Activated CD4-positive, alpha-beta memory T cell treated with anti-CD3 and anti-CD28 coated beads for 36 hours (primary cell): ENCODE measurements at regions of chr5 and their contacts with region 1.

Region 1: GRCh38 chr5:131394128-131394527 is 130.3 kb downstream of the CDC42SE2 start:
- DNase-seq: peak; percentile 69
- H3K4me3 Mint-ChIP-seq: peak overlapping the region; percentile 66
- H3K27ac Mint-ChIP-seq: peak overlapping the region; percentile 93
- H3K4me1 Mint-ChIP-seq: peaks cover 86% of the 10 kb centered on the region
- H3K27me3 Mint-ChIP-seq: no peaks in the 10 kb centered on the region

Region 2: GRCh38 chr5:131068893-131069643 is 325.1 kb before region 1 on chr5:
- CTCF ChIA-PET with region 1: no interaction called
- POLR2A ChIA-PET with region 1: no interaction called
- intact Hi-C with region 1: loop called (anchors 5 kb)
- DNase-seq: peak; percentile 79
- H3K4me3 Mint-ChIP-seq: peak overlapping the region; percentile 1
- H3K27ac Mint-ChIP-seq: peak overlapping the region; percentile 90
- H3K4me1 Mint-ChIP-seq: peaks cover 49% of the 10 kb centered on the region
- H3K27me3 Mint-ChIP-seq: no peaks in the 10 kb centered on the region

Region 3: DNA sequence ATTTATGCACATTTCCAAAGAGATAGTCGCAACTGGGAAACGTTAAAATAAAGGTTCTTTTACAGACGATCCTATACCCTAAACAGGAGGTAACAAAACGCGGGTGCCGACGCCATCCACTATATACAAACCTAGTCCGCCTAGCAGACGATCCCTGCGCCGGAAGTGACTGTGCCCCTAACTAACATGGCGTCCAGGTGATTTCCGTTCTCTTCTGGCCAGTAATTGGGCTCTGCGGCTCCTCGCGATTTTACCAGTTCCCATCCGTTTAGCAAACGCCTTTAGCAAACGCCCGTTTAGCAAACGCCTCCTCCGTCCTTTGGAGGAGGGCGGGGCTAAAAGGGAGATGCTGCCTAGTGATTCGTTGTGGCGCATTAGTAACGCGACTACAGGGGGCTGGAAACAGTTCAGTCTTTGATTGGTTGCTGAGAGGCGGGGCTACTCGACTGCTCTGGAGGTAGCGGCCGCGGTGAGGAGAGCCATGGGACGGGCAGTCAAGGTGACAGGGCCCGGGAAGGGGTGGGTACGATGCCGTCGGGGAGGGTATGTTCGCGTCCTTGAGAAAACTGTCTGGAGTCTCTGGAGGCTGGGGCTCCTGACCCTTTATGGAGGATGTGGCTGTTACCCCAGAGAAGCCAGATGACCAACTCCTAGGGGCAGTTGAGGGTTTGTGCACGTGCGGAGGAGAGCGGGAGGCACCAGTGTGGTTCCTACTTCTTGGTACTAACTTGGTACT is 223.4 kb before region 1 on chr5 and contains the start of gene LYRM7:
- CTCF ChIA-PET with region 1: interaction called, 4 read pairs
- POLR2A ChIA-PET with region 1: interaction called, 3 read pairs
- intact Hi-C with region 1: loop called (anchors 1 kb)
- DNase-seq: peak; percentile 98
- H3K4me3 Mint-ChIP-seq: peak within 1 kb of the TSS; percentile 97
- H3K27ac Mint-ChIP-seq: peak within 1 kb of the TSS; percentile 92
- H3K4me1 Mint-ChIP-seq: peaks cover 37% of the 10 kb centered on the region
- H3K27me3 Mint-ChIP-seq: no peaks in the 10 kb centered on the region
- total RNA-seq, gene LYRM7: 16.6 to 18.6 TPM

Region 4: GRCh38 chr5:131230406-131230805 is 163.7 kb before region 1 on chr5:
- CTCF ChIA-PET with region 1: no interaction called
- POLR2A ChIA-PET with region 1: no interaction called
- intact Hi-C with region 1: no loop called
- DNase-seq: no peak
- H3K4me3 Mint-ChIP-seq: no peak overlapping the region
- H3K27ac Mint-ChIP-seq: no peak overlapping the region
- H3K4me1 Mint-ChIP-seq: peaks cover 6% of the 10 kb centered on the region
- H3K27me3 Mint-ChIP-seq: no peaks in the 10 kb centered on the region

Region 5: GRCh38 chr5:131263648-131264450 is 130.3 kb before region 1 on chr5 and contains the start of gene CDC42SE2:
- CTCF ChIA-PET with region 1: interaction called, 10 read pairs
- POLR2A ChIA-PET with region 1: interaction called, 43 read pairs
- intact Hi-C with region 1: no loop called
- DNase-seq: peak; percentile 88
- H3K4me3 Mint-ChIP-seq: peak within 1 kb of the TSS; percentile 89
- H3K27ac Mint-ChIP-seq: peak within 1 kb of the TSS; percentile 95
- H3K4me1 Mint-ChIP-seq: peaks cover 48% of the 10 kb centered on the region
- H3K27me3 Mint-ChIP-seq: no peaks in the 10 kb centered on the region
- total RNA-seq, gene CDC42SE2: 103 to 104 TPM

Region 6: DNA sequence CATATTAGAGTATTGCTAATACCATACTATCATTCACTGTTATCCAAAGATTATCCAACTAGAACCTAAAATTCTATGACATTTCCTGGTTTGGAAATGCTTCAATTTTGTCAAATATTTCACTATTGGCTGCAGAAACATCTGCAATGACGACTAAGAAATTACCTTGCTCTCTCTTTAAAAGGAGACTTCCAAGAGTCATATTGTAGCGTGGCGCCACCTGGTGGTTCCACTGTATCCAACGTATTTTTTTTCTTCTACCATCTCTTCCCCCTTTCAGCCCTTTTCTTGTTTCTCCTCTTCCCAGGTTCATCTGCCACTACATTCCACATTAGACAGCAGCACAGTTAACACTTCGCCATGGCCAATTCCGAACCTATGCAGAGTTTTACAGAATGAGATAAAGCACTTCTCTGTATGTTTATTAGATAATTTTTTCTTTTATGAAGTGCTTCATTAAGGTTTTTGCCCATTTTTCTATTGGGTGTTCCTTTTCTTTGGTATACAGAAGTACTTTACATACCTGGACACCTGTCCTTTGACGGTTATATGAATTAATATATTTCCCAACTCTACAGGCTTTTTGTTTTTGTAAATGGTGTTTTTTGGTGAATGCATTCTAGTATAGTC is 23.2 kb after region 1 on chr5:
- CTCF ChIA-PET with region 1: interaction called, 5 read pairs
- POLR2A ChIA-PET with region 1: no interaction called
- intact Hi-C with region 1: loop called (anchors 1 kb)
- DNase-seq: peak; percentile 88
- H3K4me3 Mint-ChIP-seq: peak overlapping the region; percentile 49
- H3K27ac Mint-ChIP-seq: peak overlapping the region; percentile 80
- H3K4me1 Mint-ChIP-seq: peaks cover 41% of the 10 kb centered on the region
- H3K27me3 Mint-ChIP-seq: no peaks in the 10 kb centered on the region

Region 7: GRCh38 chr5:131496400-131497007 is 102.4 kb after region 1 on chr5:
- CTCF ChIA-PET with region 1: no interaction called
- POLR2A ChIA-PET with region 1: no interaction called
- intact Hi-C with region 1: no loop called
- DNase-seq: peak; percentile 35
- H3K4me3 Mint-ChIP-seq: no peak overlapping the region
- H3K27ac Mint-ChIP-seq: no peak overlapping the region
- H3K4me1 Mint-ChIP-seq: peaks cover 28% of the 10 kb centered on the region
- H3K27me3 Mint-ChIP-seq: no peaks in the 10 kb centered on the region